CD4-positive, alpha-beta T cell (primary cell): ENCODE measurements at regions of chr2 and their contacts with region 1.

Region 1: GRCh38 chr2:195649629-195650190 is 7.3 kb upstream of the SLC39A10 start:
- DNase-seq: no peak
- ATAC-seq: no peak
- H3K4me3 ChIP-seq: no peak overlapping the region
- H3K4me3 Mint-ChIP-seq: no peak overlapping the region
- H3K27ac ChIP-seq: no peak overlapping the region
- H3K27ac Mint-ChIP-seq: no peak overlapping the region
- H3K4me1 ChIP-seq: peaks cover 3% of the 10 kb centered on the region
- H3K4me1 Mint-ChIP-seq: peaks cover 15% of the 10 kb centered on the region
- H3K27me3 ChIP-seq: no peaks in the 10 kb centered on the region
- H3K27me3 Mint-ChIP-seq: no peaks in the 10 kb centered on the region
- CTCF ChIP-seq: no peak

Region 2: GRCh38 chr2:195582188-195582587 is 67.5 kb before region 1 on chr2:
- CTCF ChIA-PET with region 1: no interaction called
- POLR2A ChIA-PET with region 1: interaction called, 3 read pairs
- intact Hi-C with region 1: loop called in 1 of 2 experiments (anchors 2 kb)
- DNase-seq: no peak
- ATAC-seq: no peak
- H3K4me3 ChIP-seq: no peak overlapping the region
- H3K4me3 Mint-ChIP-seq: no peak overlapping the region
- H3K27ac ChIP-seq: no peak overlapping the region
- H3K27ac Mint-ChIP-seq: peak overlapping the region; percentile 5
- H3K4me1 ChIP-seq: peaks cover 20% of the 10 kb centered on the region
- H3K4me1 Mint-ChIP-seq: peaks cover 43% of the 10 kb centered on the region
- H3K27me3 ChIP-seq: no peaks in the 10 kb centered on the region
- H3K27me3 Mint-ChIP-seq: no peaks in the 10 kb centered on the region
- CTCF ChIP-seq: no peak

Region 3: GRCh38 chr2:195612611-195613495 is 36.9 kb before region 1 on chr2:
- CTCF ChIA-PET with region 1: no interaction called
- POLR2A ChIA-PET with region 1: no interaction called
- intact Hi-C with region 1: no loop called
- DNase-seq: no peak
- ATAC-seq: no peak
- H3K4me3 ChIP-seq: no peak overlapping the region
- H3K4me3 Mint-ChIP-seq: no peak overlapping the region
- H3K27ac ChIP-seq: no peak overlapping the region
- H3K27ac Mint-ChIP-seq: no peak overlapping the region
- H3K4me1 ChIP-seq: no peaks in the 10 kb centered on the region
- H3K4me1 Mint-ChIP-seq: peaks cover 18% of the 10 kb centered on the region
- H3K27me3 ChIP-seq: no peaks in the 10 kb centered on the region
- H3K27me3 Mint-ChIP-seq: no peaks in the 10 kb centered on the region
- CTCF ChIP-seq: no peak

Region 4: DNA sequence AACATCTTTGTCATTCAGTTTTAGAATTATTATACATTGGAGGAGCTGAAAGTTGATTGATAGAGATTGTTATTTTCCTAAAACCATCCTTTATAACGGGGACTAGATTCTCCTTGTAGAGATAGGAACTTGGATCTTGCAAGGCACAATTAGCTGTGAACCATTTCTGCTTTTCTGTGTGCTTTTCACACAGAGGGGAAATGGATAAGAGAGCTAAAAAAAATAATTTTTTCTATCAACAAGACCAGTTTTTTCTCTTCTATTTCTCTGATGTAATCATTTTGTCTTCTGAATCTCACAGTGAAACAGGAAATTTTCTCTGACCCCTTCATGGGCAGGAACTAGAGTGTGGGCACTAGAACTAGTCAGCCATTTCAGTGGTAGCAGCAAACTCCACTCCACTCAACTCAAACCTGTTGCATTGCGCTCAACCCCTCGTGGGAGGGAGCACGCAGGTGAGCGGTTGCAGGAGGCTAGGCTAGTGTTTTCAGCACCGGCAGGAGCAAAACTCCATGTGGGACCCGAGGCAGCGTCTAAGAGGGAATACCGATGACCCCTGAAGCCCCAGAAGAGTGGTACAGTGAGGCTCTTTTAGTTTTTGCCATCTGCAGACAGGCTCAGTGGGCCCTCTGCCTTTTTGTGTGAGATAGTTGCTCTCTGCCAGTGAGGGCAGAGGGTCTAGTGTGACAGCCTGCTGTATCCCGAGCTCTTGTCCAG is 16.7 kb before region 1 on chr2:
- CTCF ChIA-PET with region 1: no interaction called
- POLR2A ChIA-PET with region 1: no interaction called
- intact Hi-C with region 1: loop called in 1 of 2 experiments (anchors 2 kb)
- DNase-seq: no peak
- ATAC-seq: no peak
- H3K4me3 ChIP-seq: no peak overlapping the region
- H3K4me3 Mint-ChIP-seq: no peak overlapping the region
- H3K27ac ChIP-seq: no peak overlapping the region
- H3K27ac Mint-ChIP-seq: no peak overlapping the region
- H3K4me1 ChIP-seq: no peaks in the 10 kb centered on the region
- H3K4me1 Mint-ChIP-seq: no peaks in the 10 kb centered on the region
- H3K27me3 ChIP-seq: no peaks in the 10 kb centered on the region
- H3K27me3 Mint-ChIP-seq: no peaks in the 10 kb centered on the region
- CTCF ChIP-seq: no peak